ENCODE measurements at regions of chr9 and their contacts with region 1.

Region 1: DNA sequence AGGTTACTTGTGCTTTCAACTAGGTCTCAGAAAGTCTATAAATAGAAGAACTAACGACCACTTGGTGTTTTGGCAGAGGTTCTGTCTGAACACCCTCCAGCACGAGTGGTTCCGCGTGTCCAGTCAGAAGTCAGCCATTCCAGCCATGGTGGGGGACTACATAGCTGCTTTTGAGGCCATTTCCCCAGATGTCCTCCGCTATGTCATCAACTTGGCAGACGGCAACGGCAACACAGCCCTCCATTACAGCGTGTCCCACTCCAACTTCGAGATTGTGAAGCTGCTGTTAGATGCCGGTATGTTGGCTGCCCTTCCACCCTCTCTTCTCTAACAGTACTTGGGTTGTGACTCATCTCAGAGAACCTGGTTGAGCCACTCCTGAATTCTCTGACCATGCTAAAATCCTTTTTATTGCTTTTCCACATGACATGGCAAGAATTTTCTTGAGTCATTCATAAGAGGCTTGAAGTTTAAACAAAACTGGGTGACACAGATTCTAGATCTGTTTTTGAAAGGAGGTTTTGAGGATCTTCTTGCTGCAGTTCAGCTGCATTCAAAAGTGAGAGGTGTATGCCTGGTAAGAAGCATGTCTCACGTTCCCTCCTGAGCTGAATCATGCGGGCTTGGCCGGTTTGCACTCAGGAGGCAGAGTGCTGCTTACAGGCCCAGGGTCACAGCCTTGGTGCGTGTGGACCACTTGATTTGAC is 103.1 kb upstream of the DMRT1 start:
- DNase-seq: peak; percentile 64
- H3K4me3 ChIP-seq: no peak overlapping the region
- H3K27ac ChIP-seq: peak overlapping the region; percentile 58 to 69
- H3K4me1 ChIP-seq: peaks cover 4% of the 10 kb centered on the region
- H3K27me3 ChIP-seq: no peaks in the 10 kb centered on the region
- CTCF ChIP-seq: no peak
- POLR2A ChIP-seq: no peak

Region 2: GRCh38 chr9:694403-695154 is 43.8 kb before region 1 on chr9:
- intact Hi-C with region 1: loop called (anchors 5 kb)
- DNase-seq: no peak
- H3K4me3 ChIP-seq: peak overlapping the region in 1 of 2 donors; percentile 18
- H3K27ac ChIP-seq: peak overlapping the region; percentile 82 to 84
- H3K4me1 ChIP-seq: peaks cover 25% of the 10 kb centered on the region
- H3K27me3 ChIP-seq: no peaks in the 10 kb centered on the region
- CTCF ChIP-seq: no peak
- POLR2A ChIP-seq: no peak

Region 3: DNA sequence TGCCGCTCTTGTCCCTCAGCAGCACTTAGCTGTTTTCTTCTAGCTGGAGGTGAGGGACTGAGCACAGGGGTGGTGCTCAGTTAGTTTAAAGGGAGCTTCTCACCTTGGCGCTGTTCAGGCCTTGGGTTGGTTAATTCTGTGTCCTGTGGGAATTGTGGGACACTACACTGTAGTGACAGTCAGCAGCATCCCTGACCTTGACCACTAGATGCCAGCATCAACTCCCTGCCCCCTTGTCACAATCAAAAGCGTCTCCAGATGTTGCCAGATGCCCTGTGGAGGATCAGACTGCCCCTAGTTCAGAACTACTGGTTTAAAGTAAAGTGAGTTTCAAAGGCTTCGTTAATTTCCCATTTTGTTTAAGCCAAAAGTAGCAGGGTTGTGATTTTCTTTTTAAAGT is 172.6 kb after region 1 on chr9:
- intact Hi-C with region 1: no loop called
- DNase-seq: no peak
- H3K4me3 ChIP-seq: no peak overlapping the region
- H3K27ac ChIP-seq: no peak overlapping the region
- H3K4me1 ChIP-seq: no peaks in the 10 kb centered on the region
- H3K27me3 ChIP-seq: no peaks in the 10 kb centered on the region
- CTCF ChIP-seq: no peak
- POLR2A ChIP-seq: no peak

Measured in prostate gland (tissue), 2 donors.